ENCODE measurements at regions of chr2 and their contacts with region 1.

Region 1: GRCh38 chr2:44955593-44956392 is 14.3 kb downstream of the SIX3 start:
- DNase-seq: peak; percentile 43 to 52
- ATAC-seq: peak; percentile 58 to 68
- H3K4me3 ChIP-seq: peak overlapping the region; percentile 43 to 48 (median 45)
- H3K27ac ChIP-seq: no peak overlapping the region
- H3K4me1 ChIP-seq: peaks cover 10 to 11% of the 10 kb centered on the region in 2 donors
- H3K27me3 ChIP-seq: peaks cover 29 to 39% (median 38%) of the 10 kb centered on the region in 3 donors
- CTCF ChIP-seq: peak; percentile 70 to 96 (median 89)
- POLR2A ChIP-seq: no peak

Region 2: GRCh38 chr2:44392338-44392943 is 563.4 kb before region 1 on chr2:
- in situ Hi-C with region 1: loop called in 2 of 4 experiments (anchors 10 to 25 kb)
- intact Hi-C with region 1: loop called (anchors 1 kb)
- DNase-seq: no peak
- ATAC-seq: no peak
- H3K4me3 ChIP-seq: no peak overlapping the region
- H3K27ac ChIP-seq: no peak overlapping the region
- H3K4me1 ChIP-seq: no peaks in the 10 kb centered on the region
- H3K27me3 ChIP-seq: no peaks in the 10 kb centered on the region
- CTCF ChIP-seq: peak in 4 of 5 experiments; percentile 21 to 62 (median 44)
- POLR2A ChIP-seq: no peak

Region 3: DNA sequence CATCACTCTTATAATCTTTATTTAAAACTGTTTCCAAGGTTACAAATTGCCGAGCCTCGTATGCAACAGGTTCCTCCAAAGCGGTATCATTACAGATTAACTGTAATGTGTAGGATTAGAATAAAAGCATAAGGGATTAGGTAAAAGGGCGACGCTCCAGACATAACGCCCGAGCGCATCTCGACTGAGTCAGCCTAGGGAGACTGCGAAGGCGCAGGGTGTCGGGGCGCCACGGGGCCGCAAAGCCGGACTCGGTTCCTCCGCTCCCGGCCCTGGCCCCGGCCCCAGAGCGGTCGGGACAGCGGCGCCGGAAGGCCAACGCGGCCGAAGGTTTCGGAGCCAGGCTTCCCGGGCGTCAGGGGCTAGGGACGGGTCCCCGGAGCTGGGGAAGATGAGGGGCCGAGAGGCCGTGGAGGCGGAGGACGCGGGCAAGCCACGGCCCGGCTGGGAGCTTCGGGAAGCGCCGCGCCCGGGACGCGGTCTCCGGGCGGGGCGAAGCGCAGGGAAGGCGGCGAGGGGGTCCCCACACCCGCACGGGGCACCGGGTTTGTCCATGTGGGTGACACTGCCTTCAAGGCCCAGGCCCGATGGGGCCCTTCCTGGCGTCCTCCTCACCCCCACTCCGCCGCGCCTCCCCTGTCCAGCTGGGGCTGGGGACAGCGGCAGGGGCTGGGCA is 27.2 kb before region 1 on chr2:
- in situ Hi-C with region 1: no loop called
- intact Hi-C with region 1: no loop called
- DNase-seq: no peak
- ATAC-seq: no peak
- H3K4me3 ChIP-seq: peak overlapping the region; percentile 42 to 71 (median 47)
- H3K27ac ChIP-seq: no peak overlapping the region
- H3K4me1 ChIP-seq: peaks cover 8 to 14% of the 10 kb centered on the region in 2 donors
- H3K27me3 ChIP-seq: peaks cover 80 to 96% (median 86%) of the 10 kb centered on the region in 3 donors
- CTCF ChIP-seq: no peak
- POLR2A ChIP-seq: no peak

Region 4: DNA sequence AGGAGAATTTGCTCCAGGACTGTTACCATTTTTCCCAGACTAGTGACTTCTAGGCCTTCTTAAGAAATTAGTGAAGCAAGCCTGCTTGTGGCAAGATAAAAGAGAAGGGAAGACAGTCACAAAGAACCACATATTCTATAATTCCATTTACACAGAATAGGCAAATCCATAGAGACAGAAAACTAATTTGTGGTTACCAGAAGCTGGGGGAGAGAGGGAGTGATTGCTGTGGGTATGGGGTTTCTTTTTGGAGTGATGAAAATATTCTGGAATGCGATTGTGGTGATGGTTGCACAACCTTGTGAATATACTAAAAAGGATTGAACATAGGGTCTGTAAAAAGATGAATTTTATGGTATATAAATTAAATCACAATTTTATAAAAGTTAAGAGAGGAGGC is 91.0 kb after region 1 on chr2:
- in situ Hi-C with region 1: no loop called
- intact Hi-C with region 1: no loop called
- DNase-seq: no peak
- ATAC-seq: no peak
- H3K4me3 ChIP-seq: no peak overlapping the region
- H3K27ac ChIP-seq: no peak overlapping the region
- H3K4me1 ChIP-seq: no peaks in the 10 kb centered on the region
- H3K27me3 ChIP-seq: no peaks in the 10 kb centered on the region
- CTCF ChIP-seq: no peak
- POLR2A ChIP-seq: no peak